ENCODE measurements at regions of chr22 and their contacts with region 1.

Region 1: GRCh38 chr22:37229805-37230672 is 14.0 kb downstream of the RAC2 start:
- DNase-seq: peak; percentile 96
- H3K4me3 Mint-ChIP-seq: peak overlapping the region; percentile 79
- H3K27ac Mint-ChIP-seq: peak overlapping the region; percentile 95
- H3K4me1 Mint-ChIP-seq: peaks cover 82% of the 10 kb centered on the region
- H3K27me3 Mint-ChIP-seq: no peaks in the 10 kb centered on the region

Region 2: DNA sequence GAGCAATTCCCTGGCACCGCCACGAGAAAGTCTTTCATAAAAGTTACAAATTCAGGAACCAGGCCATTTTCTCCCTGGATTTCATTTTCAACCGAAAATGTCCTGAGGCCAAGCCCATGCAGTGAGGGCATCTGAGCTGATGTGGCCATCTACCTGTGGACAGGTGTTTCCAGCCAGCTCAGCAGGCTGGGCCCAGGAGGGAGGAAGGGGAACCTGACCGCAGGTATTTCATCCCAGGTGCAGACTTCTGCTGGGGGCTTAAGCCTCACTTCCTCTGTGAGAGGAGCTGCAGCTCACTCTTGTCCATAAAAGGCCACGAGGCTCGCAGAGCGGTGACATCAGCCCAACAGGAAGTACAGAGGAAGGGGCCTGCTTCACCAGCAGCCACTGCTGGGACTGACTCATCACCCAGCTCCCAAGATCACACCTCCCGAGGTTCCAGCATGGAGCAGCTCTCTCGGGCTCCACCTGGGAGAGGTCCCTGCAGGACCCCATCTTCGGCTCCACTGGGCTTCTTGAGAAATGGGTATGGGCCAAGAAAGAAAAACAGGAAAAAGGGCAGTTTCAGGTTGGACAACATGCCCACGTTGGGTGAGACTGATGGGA is 898.6 kb before region 1 on chr22:
- intact Hi-C with region 1: loop called (anchors 10 kb)
- DNase-seq: peak; percentile 94
- H3K4me3 Mint-ChIP-seq: peak overlapping the region; percentile 88
- H3K27ac Mint-ChIP-seq: peak overlapping the region; percentile 99
- H3K4me1 Mint-ChIP-seq: peaks cover 92% of the 10 kb centered on the region
- H3K27me3 Mint-ChIP-seq: no peaks in the 10 kb centered on the region

Region 3: GRCh38 chr22:37148742-37149665 is 81.0 kb before region 1 on chr22:
- intact Hi-C with region 1: loop called (anchors 2 kb)
- DNase-seq: peak; percentile 68
- H3K4me3 Mint-ChIP-seq: peak overlapping the region; percentile 96
- H3K27ac Mint-ChIP-seq: peak overlapping the region; percentile 99
- H3K4me1 Mint-ChIP-seq: peaks cover 54% of the 10 kb centered on the region
- H3K27me3 Mint-ChIP-seq: peaks cover 2% of the 10 kb centered on the region

Region 4: GRCh38 chr22:37244114-37244921 is 14.3 kb after region 1 on chr22 and contains the start of gene RAC2:
- intact Hi-C with region 1: loop called (anchors 1 kb)
- DNase-seq: peak; percentile 95
- H3K4me3 Mint-ChIP-seq: peak within 1 kb of the TSS; percentile 99
- H3K27ac Mint-ChIP-seq: peak within 1 kb of the TSS; percentile 98
- H3K4me1 Mint-ChIP-seq: peaks cover 48% of the 10 kb centered on the region
- H3K27me3 Mint-ChIP-seq: no peaks in the 10 kb centered on the region
- total RNA-seq, gene RAC2: 519 and 540 TPM in 2 replicates

Region 5: DNA sequence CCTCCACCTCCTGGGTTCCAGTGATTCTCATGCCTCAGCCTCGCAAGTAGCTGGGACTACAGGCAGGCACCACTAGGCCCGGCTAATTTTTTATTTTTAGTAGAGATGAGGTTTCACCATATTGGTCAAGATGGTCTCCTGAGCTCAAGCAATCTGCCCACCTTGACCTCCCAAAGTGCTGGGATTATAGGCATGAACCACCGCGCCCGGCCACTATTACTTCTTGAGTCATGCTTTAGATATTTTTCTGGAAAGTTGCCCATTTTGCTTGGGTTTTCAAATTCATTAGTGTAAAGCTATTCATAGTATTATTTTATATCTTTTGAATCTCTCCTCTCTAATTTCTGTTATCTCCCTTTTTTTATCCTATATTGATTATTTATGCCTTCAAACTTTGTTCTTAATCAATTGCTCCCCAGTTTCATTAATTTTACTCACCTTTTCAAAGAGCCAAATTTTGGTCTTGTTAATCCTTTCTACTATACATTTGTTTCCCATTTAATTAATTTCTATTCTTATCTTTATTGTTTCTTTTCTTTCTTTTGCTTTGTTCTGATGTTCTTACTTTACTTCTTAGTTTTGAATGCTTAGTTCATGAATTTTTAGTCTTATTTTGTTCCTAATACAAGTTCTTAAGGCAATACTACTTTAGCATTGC is 24.3 kb after region 1 on chr22:
- intact Hi-C with region 1: no loop called
- DNase-seq: no peak
- H3K4me3 Mint-ChIP-seq: no peak overlapping the region
- H3K27ac Mint-ChIP-seq: no peak overlapping the region
- H3K4me1 Mint-ChIP-seq: peaks cover 24% of the 10 kb centered on the region
- H3K27me3 Mint-ChIP-seq: peaks cover 7% of the 10 kb centered on the region

Region 6: GRCh38 chr22:37273126-37273845 is 43.2 kb after region 1 on chr22:
- intact Hi-C with region 1: loop called (anchors 5 kb)
- DNase-seq: peak; percentile 72
- H3K4me3 Mint-ChIP-seq: peak overlapping the region; percentile 34
- H3K27ac Mint-ChIP-seq: peak overlapping the region; percentile 77
- H3K4me1 Mint-ChIP-seq: peaks cover 52% of the 10 kb centered on the region
- H3K27me3 Mint-ChIP-seq: no peaks in the 10 kb centered on the region

Measured in activated CD4-positive, alpha-beta T cell treated with anti-CD3 and anti-CD28 coated beads, Interleukin-2, amount 10 ng/mL, durations not matched to agents 24 days and 14 days (primary cell).